Activated naive CD4-positive, alpha-beta T cell treated with anti-CD3 and anti-CD28 coated beads for 36 hours (primary cell): ENCODE measurements at regions of chr10 and their contacts with region 1.

Region 1: DNA sequence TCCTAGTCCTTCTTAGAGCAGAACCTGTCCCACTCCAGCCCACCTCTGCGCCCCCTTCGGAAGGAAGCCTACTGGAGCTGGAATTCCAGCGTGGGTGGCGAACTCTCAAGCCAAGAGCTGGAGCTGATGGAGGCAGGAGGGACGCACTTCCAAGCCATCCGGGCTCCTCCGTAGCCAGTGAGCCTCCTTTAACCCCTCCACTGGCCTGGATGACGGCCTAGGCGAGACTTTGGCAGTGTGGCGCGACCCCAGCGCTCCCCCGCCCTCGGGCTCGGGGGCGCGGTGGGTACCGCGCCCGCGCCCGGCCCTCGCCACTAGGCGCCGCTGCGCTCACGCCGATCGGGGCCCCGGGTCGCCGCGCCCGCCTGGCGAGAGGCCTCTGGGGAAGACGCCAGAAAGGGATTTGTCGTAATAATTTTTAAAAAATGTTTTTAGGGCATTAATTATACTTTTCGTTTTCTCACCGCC is 5.1 kb upstream of the EMX2 start:
- DNase-seq: no peak
- H3K4me3 Mint-ChIP-seq: no peak overlapping the region
- H3K27ac Mint-ChIP-seq: no peak overlapping the region
- H3K4me1 Mint-ChIP-seq: peaks cover 22% of the 10 kb centered on the region
- H3K27me3 Mint-ChIP-seq: peaks cover 71% of the 10 kb centered on the region

Region 2: DNA sequence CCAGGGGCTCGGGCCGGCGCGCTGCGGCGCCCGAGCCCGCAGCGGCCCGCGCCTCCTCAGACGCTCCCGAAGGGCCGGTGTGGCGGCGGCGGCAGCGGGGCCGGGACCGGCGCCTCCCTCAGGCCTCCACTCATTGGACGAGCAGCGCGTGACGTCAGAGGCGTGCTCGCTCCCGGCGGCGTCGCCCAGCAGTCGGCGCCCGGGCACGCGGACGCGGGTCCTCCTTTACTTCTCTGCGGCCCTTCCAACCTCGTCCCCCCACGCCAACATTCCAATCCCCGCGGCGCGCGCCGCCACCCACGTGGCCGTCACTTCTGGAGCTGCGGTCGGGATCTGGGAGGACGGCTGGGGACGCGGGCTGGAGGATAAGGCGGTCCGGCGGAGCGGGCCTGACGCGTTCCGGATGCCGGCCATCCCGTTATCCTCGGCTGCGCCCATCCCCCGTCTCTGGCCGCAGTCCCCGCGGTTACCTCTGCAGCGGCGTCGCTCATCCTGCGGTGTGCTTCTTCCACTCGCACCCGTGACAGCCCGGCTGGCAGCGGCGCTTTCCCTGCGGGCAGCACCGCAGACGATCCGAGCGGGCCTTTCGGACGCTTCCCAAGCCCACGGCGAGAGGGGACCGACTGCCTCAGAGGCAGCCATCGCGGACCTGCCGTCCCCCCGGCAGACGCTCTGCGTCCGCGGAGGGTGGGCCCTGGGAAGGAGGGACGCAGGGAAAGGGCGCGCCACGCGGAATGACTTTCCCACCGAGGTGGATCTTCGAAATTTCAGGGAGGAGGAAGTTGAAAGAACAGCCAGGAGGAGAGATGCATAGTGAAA is 161.9 kb before region 1 on chr10 and contains the start of gene PDZD8:
- CTCF ChIA-PET with region 1: no interaction called
- intact Hi-C with region 1: loop called (anchors 5 kb)
- DNase-seq: peak; percentile 85
- H3K4me3 Mint-ChIP-seq: peak within 1 kb of the TSS; percentile 94
- H3K27ac Mint-ChIP-seq: peak within 1 kb of the TSS; percentile 68
- H3K4me1 Mint-ChIP-seq: peaks cover 19% of the 10 kb centered on the region
- H3K27me3 Mint-ChIP-seq: peaks cover 18% of the 10 kb centered on the region
- total RNA-seq, gene PDZD8: 13.6 to 15.8 TPM

Region 3: DNA sequence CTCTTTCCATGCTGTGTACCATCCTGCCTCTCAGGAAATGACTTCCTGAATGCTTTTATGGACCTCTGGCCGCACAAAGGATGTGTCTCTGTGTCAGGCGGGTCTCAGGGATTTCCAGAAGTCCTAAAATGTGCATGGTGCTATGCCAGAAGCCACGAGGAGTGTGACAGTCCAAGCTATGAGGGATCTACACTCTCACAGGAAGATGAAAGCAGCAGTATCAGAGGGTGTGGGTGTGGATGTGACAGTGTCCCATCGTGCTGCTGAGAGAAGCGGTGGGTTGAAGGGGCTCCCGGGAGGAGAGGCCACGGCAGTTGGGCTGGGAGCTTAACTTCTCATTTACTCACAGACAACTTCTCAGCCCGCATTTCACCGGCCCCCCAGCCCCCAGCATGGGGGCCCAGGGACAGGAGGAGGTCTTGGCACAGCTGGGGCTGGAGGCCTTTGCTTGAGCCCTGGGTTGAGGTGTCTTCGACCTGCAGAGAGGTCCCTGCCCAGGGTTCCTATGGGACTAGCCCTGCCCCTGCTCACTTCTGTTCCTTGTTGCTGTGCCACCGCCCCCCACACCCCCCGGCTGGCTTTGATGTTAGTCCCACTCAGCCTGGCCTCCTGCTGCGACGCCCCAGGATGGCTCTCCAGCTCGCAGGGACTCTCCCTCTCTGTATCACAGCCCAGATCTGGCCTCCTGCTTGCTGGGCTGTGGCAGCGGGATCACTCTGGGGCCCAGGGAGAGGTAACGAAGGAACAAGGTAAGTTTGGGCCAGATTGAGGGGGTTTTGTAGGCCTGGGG is 25.7 kb before region 1 on chr10:
- CTCF ChIA-PET with region 1: no interaction called
- intact Hi-C with region 1: no loop called
- DNase-seq: no peak
- H3K4me3 Mint-ChIP-seq: no peak overlapping the region
- H3K27ac Mint-ChIP-seq: no peak overlapping the region
- H3K4me1 Mint-ChIP-seq: no peaks in the 10 kb centered on the region
- H3K27me3 Mint-ChIP-seq: peaks cover 14% of the 10 kb centered on the region

Region 4: DNA sequence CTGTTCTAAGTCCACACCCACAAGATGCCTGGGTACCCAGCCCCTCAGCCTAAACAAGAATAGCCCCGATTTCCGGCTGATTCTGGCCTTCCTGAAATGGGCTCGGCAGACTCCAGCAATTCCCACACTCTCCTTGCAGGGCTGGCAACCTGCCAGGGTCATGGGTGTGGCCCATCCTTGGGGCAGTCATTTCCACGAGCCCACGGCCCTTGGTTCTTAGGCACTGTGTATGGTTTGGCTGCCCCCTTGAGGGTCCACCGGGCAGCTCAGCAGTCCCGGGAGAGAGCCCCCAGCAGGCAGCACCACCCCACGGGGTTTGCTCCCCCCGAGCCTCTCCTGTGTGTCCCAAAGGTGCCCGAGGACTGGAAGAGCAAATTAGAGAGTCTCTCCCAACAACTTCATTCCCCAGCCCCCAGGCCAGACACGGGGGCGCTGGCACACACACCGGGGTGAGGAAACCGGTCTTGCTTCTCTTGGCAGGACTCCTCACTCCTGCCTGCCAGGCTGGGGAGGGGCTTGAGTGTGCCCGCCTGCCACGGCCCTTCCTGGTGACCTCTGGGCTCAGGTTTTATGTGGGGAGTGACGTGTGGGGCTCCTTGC is 147.3 kb after region 1 on chr10:
- CTCF ChIA-PET with region 1: no interaction called
- intact Hi-C with region 1: loop called (anchors 10 kb)
- DNase-seq: no peak
- H3K4me3 Mint-ChIP-seq: no peak overlapping the region
- H3K27ac Mint-ChIP-seq: no peak overlapping the region
- H3K4me1 Mint-ChIP-seq: no peaks in the 10 kb centered on the region
- H3K27me3 Mint-ChIP-seq: peaks cover 9% of the 10 kb centered on the region

Region 5: DNA sequence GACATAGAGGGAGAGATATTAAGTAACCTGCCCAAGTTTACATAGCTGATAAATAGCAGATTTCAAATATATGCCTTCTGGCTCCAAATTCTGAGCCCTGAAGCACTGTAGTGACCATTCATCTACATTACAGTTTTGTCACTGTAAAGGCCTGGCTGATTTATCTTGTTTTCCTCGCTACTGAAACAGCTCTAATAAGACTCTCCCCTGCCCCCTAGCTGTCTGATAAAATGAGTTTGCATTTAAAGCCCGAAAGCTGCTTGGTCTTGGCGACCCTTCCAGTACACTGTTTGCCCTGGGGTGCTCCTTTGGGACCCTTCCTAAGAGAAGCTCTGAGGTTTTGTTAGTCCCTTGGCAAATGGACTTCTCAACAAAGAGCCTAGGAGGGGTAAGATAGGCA is 569.0 kb after region 1 on chr10:
- CTCF ChIA-PET with region 1: interaction called, 3 read pairs
- intact Hi-C with region 1: loop called (anchors 5 kb)
- DNase-seq: no peak
- H3K4me3 Mint-ChIP-seq: no peak overlapping the region
- H3K27ac Mint-ChIP-seq: no peak overlapping the region
- H3K4me1 Mint-ChIP-seq: no peaks in the 10 kb centered on the region
- H3K27me3 Mint-ChIP-seq: peaks cover 16% of the 10 kb centered on the region

Region 6: GRCh38 chr10:118423800-118424479 is 886.5 kb after region 1 on chr10:
- CTCF ChIA-PET with region 1: no interaction called
- intact Hi-C with region 1: loop called (anchors 2 kb)
- DNase-seq: peak; percentile 87
- H3K4me3 Mint-ChIP-seq: no peak overlapping the region
- H3K27ac Mint-ChIP-seq: no peak overlapping the region
- H3K4me1 Mint-ChIP-seq: peaks cover 4% of the 10 kb centered on the region
- H3K27me3 Mint-ChIP-seq: peaks cover 9% of the 10 kb centered on the region